HepG2 (cell line): ENCODE measurements at regions of chr2 and their contacts with region 1.

Region 1: GRCh38 chr2:137173463-137173862 is 408.1 kb downstream of the THSD7B start:
- DNase-seq: peak; percentile 14
- ATAC-seq: peak; percentile 86
- H3K4me3 ChIP-seq: no peak overlapping the region
- H3K27ac ChIP-seq: no peak overlapping the region
- H3K4me1 ChIP-seq: 0 out of 2 replicates have a peak, but pooled peaks cover 8% of the 10 kb centered on the region
- H3K27me3 ChIP-seq: no peaks in the 10 kb centered on the region
- CTCF ChIP-seq: peak; percentile 46
- EP300 ChIP-seq: no peak
- POLR2A ChIP-seq: no peak
- RAD21 ChIP-seq: no peak

Region 2: GRCh38 chr2:137838255-137839092 is 665.0 kb after region 1 on chr2:
- CTCF ChIA-PET with region 1: no interaction called
- POLR2A ChIA-PET with region 1: no interaction called
- in situ Hi-C with region 1: no loop called
- intact Hi-C with region 1: loop called (anchors 5 kb)
- DNase-seq: peak; percentile 58
- ATAC-seq: peak; percentile 86
- H3K4me3 ChIP-seq: no peak overlapping the region
- H3K27ac ChIP-seq: no peak overlapping the region
- H3K4me1 ChIP-seq: no peaks in the 10 kb centered on the region
- H3K27me3 ChIP-seq: no peaks in the 10 kb centered on the region; a peak in 1 of 5 replicates
- CTCF ChIP-seq: peak; percentile 86
- EP300 ChIP-seq: no peak
- POLR2A ChIP-seq: no peak
- RAD21 ChIP-seq: peak; percentile 86